Pancreas (tissue), 10 donors: ENCODE measurements at regions of chr3 and their contacts with region 1.

Region 1: GRCh38 chr3:27659279-27660021 is 62.7 kb downstream of the EOMES start:
- DNase-seq: peak in 4 of 6 donors; percentile 20 to 78 (median 50)
- ATAC-seq: peak; percentile 48 to 91 (median 85)
- H3K4me3 ChIP-seq: no peak overlapping the region
- H3K27ac ChIP-seq: no peak overlapping the region
- H3K4me1 ChIP-seq: no peaks in the 10 kb centered on the region
- H3K27me3 ChIP-seq: no peaks in the 10 kb centered on the region
- CTCF ChIP-seq: peak; percentile 52 to 74 (median 64)

Region 2: GRCh38 chr3:27326629-27327545 is 332.6 kb before region 1 on chr3:
- intact Hi-C with region 1: loop called in 1 of 3 experiments (anchors 10 kb)
- DNase-seq: no peak
- ATAC-seq: peak in 2 of 4 donors; percentile 40 to 66
- H3K4me3 ChIP-seq: no peak overlapping the region
- H3K27ac ChIP-seq: peak overlapping the region in 1 of 4 donors; percentile 9
- H3K4me1 ChIP-seq: no peaks in the 10 kb centered on the region
- H3K27me3 ChIP-seq: no peaks in the 10 kb centered on the region
- CTCF ChIP-seq: no peak